Left lung (tissue), 14 donors: ENCODE measurements at regions of chr7 and their contacts with region 1.

Region 1: DNA sequence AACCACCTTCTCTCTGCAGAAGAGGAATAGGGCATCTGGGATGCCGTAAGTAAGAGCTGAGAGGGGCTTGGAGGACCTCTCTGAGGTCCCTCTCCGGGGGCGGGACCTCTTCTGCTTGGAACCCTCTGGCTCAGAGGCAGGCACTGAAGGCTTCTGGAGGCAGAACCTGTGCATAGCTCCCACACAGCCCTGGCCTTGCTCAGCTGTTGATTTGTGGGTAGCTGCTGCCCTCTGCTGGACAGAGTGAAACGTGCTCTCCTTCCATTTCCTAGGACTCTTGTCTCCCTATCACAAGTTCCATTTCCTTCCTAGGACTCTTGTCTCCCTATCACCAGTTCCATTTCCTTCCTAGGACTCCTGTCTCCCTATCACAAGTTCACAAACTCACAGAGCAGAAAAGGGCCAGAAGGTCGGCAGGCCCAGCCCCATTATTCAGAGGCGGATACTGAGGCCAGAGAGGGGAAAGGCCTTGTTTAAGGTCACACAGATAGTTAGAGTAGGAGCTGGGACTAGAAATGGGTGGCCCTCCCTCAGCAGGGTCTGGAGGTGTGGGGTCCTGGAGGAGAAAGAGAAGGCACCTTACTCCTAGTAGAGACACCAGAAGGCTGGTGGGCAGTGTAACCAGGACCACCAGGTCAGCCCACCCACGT is 30.3 kb upstream of the GARS1 start:
- DNase-seq: peak; percentile 79 to 90 (median 81)
- ATAC-seq: peak; percentile 99
- H3K4me3 ChIP-seq: no peak overlapping the region
- H3K27ac ChIP-seq: no peak overlapping the region
- H3K4me1 ChIP-seq: peaks cover 0 to 4% of the 10 kb centered on the region in 2 donors
- H3K27me3 ChIP-seq: no peaks in the 10 kb centered on the region
- CTCF ChIP-seq: peak; percentile 65 to 90

Region 2: DNA sequence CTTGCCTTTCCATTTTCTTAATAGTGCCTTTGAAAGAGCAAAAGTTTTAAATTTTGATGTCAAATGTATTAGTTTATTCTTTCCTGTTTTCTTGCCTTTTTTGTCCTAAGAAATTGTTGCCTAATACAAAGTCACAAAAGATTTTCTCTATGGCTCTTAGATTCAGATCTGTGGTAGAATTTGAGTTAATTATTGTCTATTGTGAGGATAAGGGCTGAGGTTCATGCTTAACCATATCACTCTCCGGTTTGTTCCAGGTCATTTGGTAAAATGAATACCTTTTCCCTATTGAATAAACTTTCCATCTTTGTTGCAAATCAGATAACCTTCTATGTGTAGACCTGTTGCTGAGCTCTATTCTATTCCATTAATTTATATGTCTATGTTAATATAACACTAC is 181.8 kb before region 1 on chr7:
- intact Hi-C with region 1: no loop called
- DNase-seq: no peak
- ATAC-seq: no peak
- H3K4me3 ChIP-seq: no peak overlapping the region
- H3K27ac ChIP-seq: no peak overlapping the region
- H3K4me1 ChIP-seq: no peaks in the 10 kb centered on the region
- H3K27me3 ChIP-seq: no peaks in the 10 kb centered on the region
- CTCF ChIP-seq: no peak

Region 3: DNA sequence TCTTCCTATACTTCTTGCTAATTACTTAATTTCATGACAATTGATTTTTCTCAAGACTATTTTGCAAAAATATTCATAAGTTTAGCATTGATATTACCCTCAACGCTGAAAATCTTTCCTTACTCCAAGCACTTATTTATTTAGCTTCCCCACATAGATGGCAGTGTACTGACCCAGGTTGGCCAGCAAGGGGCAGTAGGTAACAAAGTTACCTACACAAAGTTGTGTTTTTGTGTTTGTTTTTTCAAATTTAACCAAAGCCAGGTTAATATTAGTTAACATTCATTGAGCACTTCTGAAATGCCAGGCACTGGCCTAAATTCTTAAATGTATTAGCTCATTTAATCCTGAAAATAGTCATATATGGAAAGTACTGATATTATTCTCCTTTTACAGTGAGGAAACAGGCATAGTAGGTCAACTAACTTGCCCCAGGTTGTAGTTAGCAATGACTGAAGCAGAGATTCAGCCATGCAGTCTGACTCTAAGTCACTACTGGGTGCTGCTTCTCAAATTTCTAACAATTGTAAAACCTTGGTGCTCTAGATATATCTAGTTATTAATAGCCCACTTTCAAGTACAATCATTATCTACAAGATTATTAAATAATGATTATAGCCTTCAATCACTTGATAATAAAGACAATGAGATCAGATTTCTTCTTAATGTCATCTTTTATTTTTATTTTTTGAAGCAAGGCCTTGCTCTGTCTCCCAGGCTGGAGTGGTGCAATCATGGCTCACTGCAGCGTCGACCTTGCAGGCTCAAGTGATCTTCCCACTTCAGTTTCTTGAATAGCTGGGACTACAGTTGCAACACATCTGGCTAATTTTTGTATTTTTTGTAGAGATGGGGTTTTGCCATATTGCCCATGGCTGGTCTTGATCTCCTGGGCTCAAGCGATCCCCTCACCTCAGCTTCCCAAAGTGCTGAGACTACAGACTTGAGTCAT is 54.0 kb before region 1 on chr7:
- intact Hi-C with region 1: loop called in 1 of 2 experiments (anchors 10 kb)
- DNase-seq: peak in 1 of 4 donors; percentile 49
- ATAC-seq: peak; percentile 95
- H3K4me3 ChIP-seq: no peak overlapping the region
- H3K27ac ChIP-seq: no peak overlapping the region
- H3K4me1 ChIP-seq: peaks cover 0 to 12% of the 10 kb centered on the region in 2 donors
- H3K27me3 ChIP-seq: no peaks in the 10 kb centered on the region
- CTCF ChIP-seq: peak; percentile 78 to 89

Region 4: GRCh38 chr7:30708976-30709375 is 144.6 kb after region 1 on chr7:
- intact Hi-C with region 1: no loop called
- DNase-seq: no peak
- ATAC-seq: no peak
- H3K4me3 ChIP-seq: no peak overlapping the region
- H3K27ac ChIP-seq: no peak overlapping the region
- H3K4me1 ChIP-seq: no peaks in the 10 kb centered on the region
- H3K27me3 ChIP-seq: no peaks in the 10 kb centered on the region
- CTCF ChIP-seq: no peak